CD8-positive, alpha-beta T cell (primary cell): ENCODE measurements at regions of chr10 and their contacts with region 1.

Region 1: GRCh38 chr10:119165171-119166110 is at the start of gene SFXN4:
- DNase-seq: peak; percentile 59 to 89 (median 77)
- ATAC-seq: peak; percentile 93
- H3K4me3 ChIP-seq: peak within 1 kb of the TSS; percentile 49 to 80
- H3K4me3 Mint-ChIP-seq: peak within 1 kb of the TSS; percentile 95
- H3K27ac ChIP-seq: peak within 1 kb of the TSS; percentile 61 to 71
- H3K27ac Mint-ChIP-seq: peak within 1 kb of the TSS; percentile 96
- H3K4me1 ChIP-seq: peaks cover 18% of the 10 kb centered on the region
- H3K4me1 Mint-ChIP-seq: peaks cover 34% of the 10 kb centered on the region
- H3K27me3 ChIP-seq: no peaks in the 10 kb centered on the region
- H3K27me3 Mint-ChIP-seq: no peaks in the 10 kb centered on the region
- CTCF ChIP-seq: no peak
- total RNA-seq, gene SFXN4: 10.5 to 10.8 TPM

Region 2: DNA sequence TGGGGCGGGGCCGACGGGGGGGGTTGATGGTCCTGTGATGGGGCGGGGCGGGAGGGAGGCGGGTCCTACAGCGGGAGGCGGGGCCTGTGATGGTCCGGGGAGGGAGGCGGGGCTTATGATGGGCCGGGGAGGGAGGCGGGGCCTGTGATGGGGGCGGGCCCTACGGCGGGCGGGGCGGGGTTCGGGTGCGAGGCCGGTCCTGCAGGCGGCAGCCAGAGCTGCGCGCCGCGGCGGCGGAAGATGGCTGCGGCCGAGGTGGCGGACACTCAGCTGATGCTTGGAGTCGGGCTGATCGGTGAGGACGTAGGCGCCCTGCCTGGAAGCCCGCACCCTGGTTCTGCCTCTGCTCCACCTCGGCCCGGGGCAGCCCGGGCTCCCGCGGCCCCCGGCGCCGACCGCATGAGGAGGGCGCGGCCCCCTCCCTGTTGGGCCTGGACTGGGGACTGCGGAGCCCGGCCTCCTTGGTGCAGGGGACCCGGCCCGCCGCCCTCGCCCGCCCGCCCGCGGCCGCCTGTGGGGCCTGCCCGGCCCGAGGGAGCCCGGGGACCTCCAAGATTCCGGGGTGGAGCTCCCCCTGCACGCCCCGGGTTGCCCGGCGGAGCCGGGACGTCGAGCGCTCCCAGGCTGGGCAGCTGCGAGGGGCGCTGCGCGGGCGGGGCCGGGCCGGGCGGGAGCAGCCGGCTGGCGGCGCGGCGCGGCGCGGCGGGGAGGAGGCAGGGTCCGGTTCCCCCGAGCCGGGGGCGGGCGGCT is 61.4 kb before region 1 on chr10 and contains the start of gene DENND10:
- CTCF ChIA-PET with region 1: no interaction called
- POLR2A ChIA-PET with region 1: no interaction called
- intact Hi-C with region 1: no loop called
- DNase-seq: peak; percentile 55 to 88 (median 78)
- ATAC-seq: peak; percentile 85
- H3K4me3 ChIP-seq: peak within 1 kb of the TSS; percentile 46 to 49
- H3K4me3 Mint-ChIP-seq: peak within 1 kb of the TSS; percentile 90
- H3K27ac ChIP-seq: peak within 1 kb of the TSS; percentile 37 to 59
- H3K27ac Mint-ChIP-seq: peak within 1 kb of the TSS; percentile 93
- H3K4me1 ChIP-seq: peaks cover 4% of the 10 kb centered on the region
- H3K4me1 Mint-ChIP-seq: peaks cover 20% of the 10 kb centered on the region
- H3K27me3 ChIP-seq: no peaks in the 10 kb centered on the region
- H3K27me3 Mint-ChIP-seq: no peaks in the 10 kb centered on the region
- CTCF ChIP-seq: no peak
- total RNA-seq, gene DENND10: 28.8 to 30.5 TPM

Region 3: GRCh38 chr10:119139464-119140067 is 25.9 kb before region 1 on chr10:
- CTCF ChIA-PET with region 1: interaction called, 3 read pairs
- POLR2A ChIA-PET with region 1: no interaction called
- intact Hi-C with region 1: loop called in 1 of 2 experiments (anchors 1 kb)
- DNase-seq: peak; percentile 14 to 71 (median 53)
- ATAC-seq: peak; percentile 88
- H3K4me3 ChIP-seq: no peak overlapping the region
- H3K4me3 Mint-ChIP-seq: no peak overlapping the region
- H3K27ac ChIP-seq: no peak overlapping the region
- H3K27ac Mint-ChIP-seq: peak overlapping the region; percentile 34
- H3K4me1 ChIP-seq: no peaks in the 10 kb centered on the region
- H3K4me1 Mint-ChIP-seq: peaks cover 6% of the 10 kb centered on the region
- H3K27me3 ChIP-seq: no peaks in the 10 kb centered on the region
- H3K27me3 Mint-ChIP-seq: no peaks in the 10 kb centered on the region
- CTCF ChIP-seq: peak; percentile 38